Heart left ventricle (tissue), 16 donors: ENCODE measurements at regions of chr10 and their contacts with region 1.

Region 1: GRCh38 chr10:123132576-123133477 is 2.9 kb upstream of the HMX3 start:
- DNase-seq: peak; percentile 81 to 89 (median 83)
- ATAC-seq: peak; percentile 64 to 90 (median 84)
- H3K4me3 ChIP-seq: peak overlapping the region in 9 of 12 donors; percentile 14 to 49 (median 30)
- H3K27ac ChIP-seq: no peak overlapping the region
- H3K4me1 ChIP-seq: peaks cover 9 to 54% (median 41%) of the 10 kb centered on the region in 12 donors
- H3K27me3 ChIP-seq: peaks cover 58 to 100% (median 92%) of the 10 kb centered on the region in 9 donors
- CTCF ChIP-seq: peak; percentile 83 to 95 (median 91)
- POLR2A ChIP-seq: no peak

Region 2: GRCh38 chr10:123380497-123381085 is 247.8 kb after region 1 on chr10:
- intact Hi-C with region 1: loop called in 2 of 10 experiments (anchors 10 kb)
- DNase-seq: no peak
- ATAC-seq: no peak
- H3K4me3 ChIP-seq: no peak overlapping the region
- H3K27ac ChIP-seq: no peak overlapping the region
- H3K4me1 ChIP-seq: no peaks in the 10 kb centered on the region
- H3K27me3 ChIP-seq: peaks cover 0 to 11% (median 0%) of the 10 kb centered on the region in 9 donors
- CTCF ChIP-seq: peak in 3 of 12 donors; percentile 18 to 21 (median 20)
- POLR2A ChIP-seq: no peak

Region 3: GRCh38 chr10:123442901-123443300 is 310.1 kb after region 1 on chr10:
- intact Hi-C with region 1: no loop called
- DNase-seq: no peak
- ATAC-seq: no peak
- H3K4me3 ChIP-seq: no peak overlapping the region
- H3K27ac ChIP-seq: no peak overlapping the region
- H3K4me1 ChIP-seq: no peaks in the 10 kb centered on the region
- H3K27me3 ChIP-seq: peaks cover 0 to 2% (median 0%) of the 10 kb centered on the region in 9 donors
- CTCF ChIP-seq: no peak
- POLR2A ChIP-seq: no peak

Region 4: GRCh38 chr10:123782026-123782425 is 649.2 kb after region 1 on chr10:
- intact Hi-C with region 1: no loop called
- DNase-seq: no peak
- ATAC-seq: no peak
- H3K4me3 ChIP-seq: no peak overlapping the region
- H3K27ac ChIP-seq: no peak overlapping the region
- H3K4me1 ChIP-seq: peaks cover 0 to 5% (median 0%) of the 10 kb centered on the region in 12 donors
- H3K27me3 ChIP-seq: peaks cover 0 to 4% (median 0%) of the 10 kb centered on the region in 9 donors
- CTCF ChIP-seq: no peak
- POLR2A ChIP-seq: no peak

Region 5: GRCh38 chr10:123967396-123968243 is 834.8 kb after region 1 on chr10:
- intact Hi-C with region 1: loop called in 1 of 10 experiments (anchors 10 kb)
- DNase-seq: peak; percentile 56 to 83 (median 67)
- ATAC-seq: peak in 3 of 4 donors; percentile 75 to 86 (median 76)
- H3K4me3 ChIP-seq: peak overlapping the region in 1 of 12 donors; percentile 26
- H3K27ac ChIP-seq: no peak overlapping the region
- H3K4me1 ChIP-seq: peaks cover 0 to 6% (median 0%) of the 10 kb centered on the region in 12 donors
- H3K27me3 ChIP-seq: peaks cover 0 to 65% (median 42%) of the 10 kb centered on the region in 9 donors
- CTCF ChIP-seq: peak; percentile 79 to 94 (median 84)
- POLR2A ChIP-seq: no peak